ENCODE measurements at regions of chr7 and their contacts with region 1.

Region 1: GRCh38 chr7:101691822-101692384 is 62.8 kb upstream of the MYL10 start:
- DNase-seq: peak; percentile 39 to 78
- H3K4me3 ChIP-seq: no peak overlapping the region
- H3K27ac ChIP-seq: peak overlapping the region in 1 of 5 donors; percentile 53
- H3K4me1 ChIP-seq: peaks cover 8 to 23% (median 9%) of the 10 kb centered on the region in 4 donors
- H3K27me3 ChIP-seq: peaks cover 0 to 17% (median 0%) of the 10 kb centered on the region in 3 donors
- CTCF ChIP-seq: no peak
- EP300 ChIP-seq: no peak
- POLR2A ChIP-seq: no peak

Region 2: DNA sequence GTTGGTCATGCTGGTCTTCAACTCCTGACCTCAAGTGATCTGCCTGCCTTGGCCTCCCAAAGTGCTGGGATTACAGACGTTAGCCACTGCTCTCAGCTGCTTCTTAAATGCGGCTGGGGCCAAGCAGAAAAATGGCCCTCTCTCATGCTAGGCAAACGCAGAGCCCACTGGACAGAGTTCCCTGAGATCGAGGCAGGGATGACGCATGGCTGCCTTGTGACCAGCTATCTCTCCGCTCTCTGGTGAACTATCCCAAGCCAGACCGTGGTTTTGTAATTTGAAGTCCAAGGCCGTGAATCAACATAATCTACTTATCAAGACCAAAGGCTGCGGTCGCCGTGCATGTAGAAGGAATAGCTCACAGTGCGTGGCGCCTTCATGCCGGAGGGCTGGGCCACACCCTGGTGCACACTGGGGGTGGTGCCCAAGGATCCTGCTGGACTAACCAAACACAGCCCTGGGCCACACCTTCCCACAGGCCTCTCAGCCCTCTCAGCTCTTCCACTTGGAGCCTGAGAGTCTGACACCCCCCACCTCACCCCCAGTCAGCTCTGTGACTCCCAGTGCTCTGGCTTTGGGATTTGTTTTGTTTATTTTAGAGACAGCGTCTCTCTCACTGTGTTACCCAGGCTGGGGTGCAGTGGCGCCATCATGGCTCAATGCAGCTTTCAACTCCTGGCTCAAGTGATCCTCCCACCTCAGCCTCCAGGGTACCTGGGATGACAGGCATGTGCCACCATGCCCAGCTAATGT is 37.5 kb after region 1 on chr7:
- intact Hi-C with region 1: no loop called
- DNase-seq: peak; percentile 84 to 94
- H3K4me3 ChIP-seq: no peak overlapping the region
- H3K27ac ChIP-seq: peak overlapping the region in 4 of 5 donors; percentile 6 to 71 (median 40)
- H3K4me1 ChIP-seq: peaks cover 0 to 30% (median 16%) of the 10 kb centered on the region in 4 donors
- H3K27me3 ChIP-seq: no peaks in the 10 kb centered on the region
- CTCF ChIP-seq: no peak
- EP300 ChIP-seq: no peak
- POLR2A ChIP-seq: no peak

Region 3: GRCh38 chr7:101743241-101743994 is 51.5 kb after region 1 on chr7:
- intact Hi-C with region 1: loop called (anchors 10 kb)
- DNase-seq: peak; percentile 63 to 88
- H3K4me3 ChIP-seq: peak overlapping the region; percentile 40 to 63 (median 48)
- H3K27ac ChIP-seq: no peak overlapping the region
- H3K4me1 ChIP-seq: peaks cover 5 to 42% (median 15%) of the 10 kb centered on the region in 4 donors
- H3K27me3 ChIP-seq: peaks cover 0 to 27% (median 0%) of the 10 kb centered on the region in 3 donors
- CTCF ChIP-seq: peak in 2 of 7 experiments; percentile 15 to 55
- EP300 ChIP-seq: no peak
- POLR2A ChIP-seq: no peak

Region 4: GRCh38 chr7:101804967-101805366 is 113.1 kb after region 1 on chr7:
- intact Hi-C with region 1: loop called (anchors 10 kb)
- DNase-seq: peak; percentile 30 to 67
- H3K4me3 ChIP-seq: no peak overlapping the region
- H3K27ac ChIP-seq: no peak overlapping the region
- H3K4me1 ChIP-seq: peaks cover 0 to 18% (median 12%) of the 10 kb centered on the region in 4 donors
- H3K27me3 ChIP-seq: peaks cover 0 to 50% (median 10%) of the 10 kb centered on the region in 3 donors
- CTCF ChIP-seq: peak in 5 of 7 experiments; percentile 9 to 44 (median 22)
- EP300 ChIP-seq: no peak
- POLR2A ChIP-seq: no peak

Measured in stomach (tissue), 19 donors.